Psoas muscle (tissue), 8 donors: ENCODE measurements at regions of chr3 and their contacts with region 1.

Region 1: GRCh38 chr3:133089906-133090485 is 51.8 kb downstream of the TMEM108 start:
- DNase-seq: no peak
- ATAC-seq: no peak
- H3K4me3 ChIP-seq: no peak overlapping the region
- H3K27ac ChIP-seq: no peak overlapping the region
- H3K4me1 ChIP-seq: peaks cover 15% of the 10 kb centered on the region
- H3K27me3 ChIP-seq: no peaks in the 10 kb centered on the region
- CTCF ChIP-seq: no peak

Region 2: DNA sequence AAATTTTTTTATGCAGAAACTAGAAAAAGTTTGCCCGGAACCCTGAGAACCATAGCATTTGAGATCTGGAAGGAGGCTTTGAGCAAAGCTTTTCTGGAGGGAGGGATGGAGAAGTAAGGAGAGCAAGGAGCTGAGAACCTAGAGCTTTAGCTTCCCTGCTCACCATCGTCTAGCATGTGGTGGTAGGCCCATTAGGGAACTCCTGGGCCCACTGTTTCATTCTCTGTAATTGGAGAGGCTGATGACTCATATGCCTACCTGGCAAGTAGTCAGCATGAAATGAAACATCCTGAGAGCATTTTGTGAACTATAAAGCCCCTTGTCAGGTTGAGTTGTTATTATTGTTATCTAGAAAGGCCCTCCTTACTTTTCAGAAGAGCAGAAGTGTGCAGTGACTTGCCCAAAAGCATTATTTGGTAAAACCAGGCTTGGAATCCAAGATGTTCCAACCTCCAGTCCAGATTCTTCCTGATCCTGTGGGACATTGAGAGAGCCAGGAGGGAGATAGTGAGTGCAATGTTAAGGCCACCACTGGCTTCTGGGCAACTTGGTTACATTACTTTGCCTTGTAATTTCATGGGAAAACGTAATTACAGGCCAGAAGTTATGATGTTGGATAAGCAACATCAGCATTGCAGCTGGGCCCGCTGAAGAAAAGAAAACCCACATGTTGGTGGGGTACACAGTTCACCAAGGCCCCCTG is 205.4 kb after region 1 on chr3:
- intact Hi-C with region 1: loop called in 1 of 2 experiments (anchors 10 kb)
- DNase-seq: no peak
- ATAC-seq: peak; percentile 62 to 75 (median 74)
- H3K4me3 ChIP-seq: no peak overlapping the region
- H3K27ac ChIP-seq: no peak overlapping the region
- H3K4me1 ChIP-seq: peaks cover 8% of the 10 kb centered on the region
- H3K27me3 ChIP-seq: no peaks in the 10 kb centered on the region
- CTCF ChIP-seq: no peak

Region 3: GRCh38 chr3:133591271-133591742 is 501.3 kb after region 1 on chr3:
- intact Hi-C with region 1: no loop called
- DNase-seq: no peak
- ATAC-seq: peak in 2 of 4 donors; percentile 14 to 35
- H3K4me3 ChIP-seq: no peak overlapping the region
- H3K27ac ChIP-seq: no peak overlapping the region
- H3K4me1 ChIP-seq: no peaks in the 10 kb centered on the region
- H3K27me3 ChIP-seq: no peaks in the 10 kb centered on the region
- CTCF ChIP-seq: no peak